BJ (cell line): ENCODE measurements at regions of chr12 and their contacts with region 1.

Region 1: GRCh38 chr12:54379401-54380201 is 4.9 kb downstream of the ZNF385A start:
- DNase-seq: no peak
- H3K4me3 ChIP-seq: peak overlapping the region; percentile 43
- H3K27me3 ChIP-seq: no peaks in the 10 kb centered on the region
- CTCF ChIP-seq: peak; percentile 100

Region 2: GRCh38 chr12:54294152-54294952 is 85.2 kb before region 1 on chr12:
- CTCF ChIA-PET with region 1: interaction called, 17 read pairs
- POLR2A ChIA-PET with region 1: no interaction called
- DNase-seq: no peak
- H3K4me3 ChIP-seq: no peak overlapping the region
- H3K27me3 ChIP-seq: peaks cover 3% of the 10 kb centered on the region; the same call in 1 of the 2 replicates
- CTCF ChIP-seq: peak; percentile 89

Region 3: DNA sequence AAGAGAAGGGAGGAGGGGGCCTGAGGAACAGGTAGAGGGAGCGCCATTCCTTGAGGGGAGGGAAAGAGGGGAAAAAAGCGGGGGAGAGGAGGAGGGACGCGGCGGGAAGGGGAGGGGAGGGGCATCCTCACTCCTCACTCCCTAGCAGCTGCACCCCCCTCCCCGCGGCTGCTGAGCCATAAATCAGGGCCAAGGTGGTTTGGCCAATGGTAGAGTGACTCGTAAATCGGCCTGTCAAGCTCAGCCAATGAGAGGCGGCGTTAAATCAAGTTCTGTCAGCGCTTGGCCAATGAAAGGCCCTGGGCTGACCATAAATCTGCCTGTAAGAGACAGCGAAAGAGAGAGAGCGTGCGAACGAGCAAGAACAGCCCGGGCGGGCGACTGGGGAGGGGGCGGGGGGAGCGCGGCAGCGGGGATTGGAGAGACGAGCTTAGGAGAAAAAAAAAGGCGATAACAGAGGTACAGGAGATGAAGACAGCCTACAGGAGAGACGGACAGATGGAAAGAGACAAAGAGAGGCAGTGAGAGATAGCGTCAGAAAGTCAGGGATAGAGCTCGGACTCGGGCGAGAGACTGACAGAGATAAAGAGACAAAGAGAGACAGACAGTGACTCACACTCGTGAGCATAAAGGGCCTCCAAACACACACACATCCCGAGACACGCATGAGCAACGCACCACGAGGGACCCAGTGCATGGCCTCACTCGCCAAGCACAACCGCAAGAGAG is 20.4 kb before region 1 on chr12:
- CTCF ChIA-PET with region 1: interaction called, 26 read pairs
- POLR2A ChIA-PET with region 1: no interaction called
- DNase-seq: peak; percentile 93
- H3K4me3 ChIP-seq: peak overlapping the region; percentile 55
- H3K27me3 ChIP-seq: no peaks in the 10 kb centered on the region
- CTCF ChIP-seq: no peak

Region 4: DNA sequence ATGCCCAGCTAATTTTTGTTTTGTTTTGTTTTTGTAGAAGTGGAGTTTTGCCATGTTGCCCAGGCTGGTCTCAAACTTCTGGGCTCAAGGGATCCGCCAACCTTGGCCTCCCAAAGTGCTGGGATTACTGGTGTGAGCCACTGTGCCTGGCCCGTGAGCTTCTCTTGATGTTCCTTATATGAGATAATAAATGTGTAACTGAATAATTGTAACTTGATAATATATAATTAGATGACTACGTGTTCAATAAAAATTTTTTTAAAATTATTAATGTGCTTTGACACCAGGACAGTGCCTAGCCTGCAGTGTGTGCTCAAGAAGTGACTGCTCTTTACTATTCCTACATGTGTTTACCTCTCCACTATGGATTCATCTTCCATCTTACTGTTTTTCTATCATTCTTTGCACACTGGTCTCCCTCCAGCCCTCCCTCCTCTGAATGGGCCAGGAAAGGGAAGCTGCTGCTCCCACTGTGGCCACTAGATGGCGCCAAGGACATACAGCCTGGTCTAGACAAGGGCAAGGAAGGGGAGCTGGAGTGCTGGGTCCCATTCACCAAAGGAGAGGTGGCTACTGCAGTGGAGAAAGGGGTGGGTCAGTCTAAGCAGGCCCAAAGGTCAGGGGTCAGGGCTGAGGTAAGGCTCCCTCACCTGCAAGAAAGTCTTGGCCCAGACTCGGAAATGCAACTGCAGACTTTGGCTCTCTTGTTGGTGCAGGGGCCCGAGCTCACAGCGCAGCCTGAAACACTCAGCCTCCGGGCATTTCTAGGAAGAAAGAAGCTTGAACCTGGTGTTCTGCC is 19.6 kb after region 1 on chr12:
- CTCF ChIA-PET with region 1: interaction called, 41 read pairs
- POLR2A ChIA-PET with region 1: no interaction called
- DNase-seq: no peak
- H3K4me3 ChIP-seq: no peak overlapping the region
- H3K27me3 ChIP-seq: no peaks in the 10 kb centered on the region
- CTCF ChIP-seq: peak; percentile 100

Region 5: GRCh38 chr12:54431911-54432814 is 52.6 kb after region 1 on chr12:
- CTCF ChIA-PET with region 1: interaction called, 16 read pairs
- POLR2A ChIA-PET with region 1: no interaction called
- DNase-seq: no peak
- H3K4me3 ChIP-seq: no peak overlapping the region
- H3K27me3 ChIP-seq: no peaks in the 10 kb centered on the region
- CTCF ChIP-seq: no peak